Activated CD4-positive, alpha-beta T cell treated with anti-CD3 and anti-CD28 coated beads, Interleukin-2, amount 10 ng/mL, durations not matched to agents 24 days and 14 days (primary cell): ENCODE measurements at regions of chr21 and their contacts with region 1.

Region 1: DNA sequence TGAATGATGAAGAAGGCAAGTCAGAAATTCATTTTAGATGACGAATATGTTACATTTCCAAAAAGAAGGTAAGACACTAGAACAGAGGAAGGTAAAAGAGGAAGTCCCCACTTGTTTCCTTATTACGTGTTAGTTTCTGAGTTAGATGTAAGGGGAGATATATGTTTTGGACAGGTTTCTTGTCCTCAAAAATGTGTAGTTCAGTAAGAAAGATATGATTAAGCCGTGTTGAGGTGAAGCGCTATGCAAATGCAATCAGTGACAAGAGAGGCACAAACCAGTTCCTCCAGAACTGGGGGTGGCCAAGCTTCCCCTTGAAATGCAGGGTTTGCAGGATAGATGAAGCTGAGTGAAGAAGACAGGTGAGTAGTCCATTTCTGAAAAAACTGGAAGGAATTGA is 293.3 kb upstream of the RUNX1 start:
- DNase-seq: no peak
- H3K4me3 Mint-ChIP-seq: peak overlapping the region; percentile 53
- H3K27ac Mint-ChIP-seq: peak overlapping the region; percentile 88
- H3K4me1 Mint-ChIP-seq: peaks cover 41% of the 10 kb centered on the region
- H3K27me3 Mint-ChIP-seq: no peaks in the 10 kb centered on the region

Region 2: DNA sequence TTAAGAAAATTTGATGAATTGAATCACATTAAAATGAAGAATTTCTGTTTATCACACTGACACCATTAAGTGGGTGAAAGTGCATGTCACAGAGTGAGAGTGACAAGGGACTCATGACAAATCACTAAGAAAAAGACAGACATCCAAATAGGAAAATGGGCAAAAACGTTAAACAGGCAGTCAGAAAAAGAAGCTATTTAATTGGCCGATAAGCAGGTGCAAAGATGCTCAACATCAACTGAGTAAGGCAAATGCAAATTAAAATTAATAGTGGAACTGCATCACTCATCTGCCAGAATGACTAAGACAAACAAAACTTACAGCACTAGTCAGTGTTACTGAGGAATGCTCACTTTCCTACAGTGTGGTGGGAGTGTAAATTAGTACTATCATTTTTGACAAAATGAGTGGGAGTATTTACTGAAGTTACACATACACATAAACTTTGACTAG is 254.1 kb before region 1 on chr21:
- intact Hi-C with region 1: loop called (anchors 2 kb)
- DNase-seq: no peak
- H3K4me3 Mint-ChIP-seq: no peak overlapping the region
- H3K27ac Mint-ChIP-seq: peak overlapping the region; percentile 96
- H3K4me1 Mint-ChIP-seq: peaks cover 30% of the 10 kb centered on the region
- H3K27me3 Mint-ChIP-seq: no peaks in the 10 kb centered on the region

Region 3: DNA sequence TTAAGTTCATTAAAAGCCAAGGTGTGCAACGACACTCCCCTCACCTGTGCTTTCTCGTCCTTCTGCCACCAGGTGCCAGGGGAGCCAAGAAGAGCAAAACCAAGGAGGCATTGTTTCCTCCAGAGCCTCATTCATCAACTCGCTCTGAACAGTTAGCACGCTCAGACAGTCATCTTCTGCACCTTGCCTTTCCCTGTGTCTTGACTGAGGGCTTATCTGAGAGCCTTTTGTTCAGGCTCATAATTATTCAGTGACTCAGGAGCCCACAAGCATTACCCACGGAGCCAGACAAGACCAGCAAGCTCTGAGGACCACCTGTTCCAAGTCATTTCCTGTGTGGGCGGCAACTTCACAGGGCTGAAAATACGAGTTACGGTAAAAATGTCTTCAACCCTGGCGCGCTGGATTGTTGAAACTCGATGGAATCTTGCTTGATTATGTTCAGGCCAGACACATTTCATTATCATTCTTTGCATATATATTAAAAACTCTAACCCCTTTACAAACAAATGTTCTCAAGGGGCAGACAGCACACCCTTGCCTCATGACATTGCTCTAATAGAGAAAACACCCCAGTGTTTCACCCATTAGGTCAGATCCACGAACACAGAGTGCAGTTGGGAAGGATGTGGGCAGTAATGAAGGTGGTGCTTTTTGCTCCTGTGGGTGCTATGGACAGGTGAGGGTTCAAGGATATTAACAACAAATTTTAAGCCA is 203.6 kb before region 1 on chr21:
- intact Hi-C with region 1: loop called (anchors 2 kb)
- DNase-seq: peak; percentile 68
- H3K4me3 Mint-ChIP-seq: peak overlapping the region; percentile 74
- H3K27ac Mint-ChIP-seq: peak overlapping the region; percentile 97
- H3K4me1 Mint-ChIP-seq: peaks cover 30% of the 10 kb centered on the region
- H3K27me3 Mint-ChIP-seq: no peaks in the 10 kb centered on the region

Region 4: GRCh38 chr21:35226948-35227744 is 115.3 kb before region 1 on chr21:
- intact Hi-C with region 1: loop called (anchors 2 kb)
- DNase-seq: peak; percentile 85
- H3K4me3 Mint-ChIP-seq: peak overlapping the region; percentile 46
- H3K27ac Mint-ChIP-seq: peak overlapping the region; percentile 70
- H3K4me1 Mint-ChIP-seq: peaks cover 30% of the 10 kb centered on the region
- H3K27me3 Mint-ChIP-seq: no peaks in the 10 kb centered on the region

Region 5: DNA sequence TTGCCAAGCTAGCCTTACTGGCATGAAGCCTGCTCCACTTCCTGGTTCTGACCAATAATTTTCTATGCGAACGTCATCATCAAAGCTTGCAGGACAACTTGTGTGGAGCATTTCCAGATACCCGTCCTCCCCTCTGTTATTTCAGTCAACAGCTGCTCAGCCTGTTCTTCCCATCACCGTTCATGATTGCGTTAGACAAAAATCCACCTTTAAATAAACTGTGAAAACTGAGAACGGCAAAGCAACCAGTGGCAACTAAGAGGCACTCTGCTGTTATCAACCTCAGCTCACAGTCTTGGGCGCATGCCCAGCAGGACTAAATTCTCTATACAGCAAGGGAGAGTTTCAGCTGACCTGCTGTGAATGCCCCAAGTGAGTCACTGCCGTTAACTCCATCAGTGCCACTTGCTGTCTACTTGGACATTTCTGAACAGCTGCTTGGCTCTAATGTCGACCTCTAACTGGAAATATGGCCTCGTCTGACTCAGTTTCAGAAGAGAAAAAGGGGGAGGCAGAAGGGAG is 85.9 kb before region 1 on chr21:
- intact Hi-C with region 1: loop called (anchors 2 kb)
- DNase-seq: no peak
- H3K4me3 Mint-ChIP-seq: no peak overlapping the region
- H3K27ac Mint-ChIP-seq: peak overlapping the region; percentile 12
- H3K4me1 Mint-ChIP-seq: no peaks in the 10 kb centered on the region
- H3K27me3 Mint-ChIP-seq: no peaks in the 10 kb centered on the region

Region 6: GRCh38 chr21:35358008-35358407 is 15.6 kb after region 1 on chr21:
- intact Hi-C with region 1: loop called (anchors 2 kb)
- DNase-seq: no peak
- H3K4me3 Mint-ChIP-seq: no peak overlapping the region
- H3K27ac Mint-ChIP-seq: peak overlapping the region; percentile 83
- H3K4me1 Mint-ChIP-seq: peaks cover 12% of the 10 kb centered on the region
- H3K27me3 Mint-ChIP-seq: no peaks in the 10 kb centered on the region

Region 7: GRCh38 chr21:35528116-35529042 is 185.9 kb after region 1 on chr21:
- intact Hi-C with region 1: loop called (anchors 5 kb)
- DNase-seq: peak; percentile 82
- H3K4me3 Mint-ChIP-seq: peak overlapping the region; percentile 86
- H3K27ac Mint-ChIP-seq: peak overlapping the region; percentile 94
- H3K4me1 Mint-ChIP-seq: peaks cover 49% of the 10 kb centered on the region
- H3K27me3 Mint-ChIP-seq: no peaks in the 10 kb centered on the region